ENCODE measurements at regions of chr18 and their contacts with region 1.

Region 1: GRCh38 chr18:80034068-80034851 is at the start of gene RBFA:
- DNase-seq: peak; percentile 97
- H3K4me3 Mint-ChIP-seq: peak within 1 kb of the TSS; percentile 96
- H3K27ac Mint-ChIP-seq: peak within 1 kb of the TSS; percentile 95
- H3K4me1 Mint-ChIP-seq: peaks cover 16% of the 10 kb centered on the region
- H3K27me3 Mint-ChIP-seq: no peaks in the 10 kb centered on the region
- CTCF ChIP-seq: peak; percentile 28
- total RNA-seq, gene RBFA: 20.5 TPM in 2 replicates

Region 2: DNA sequence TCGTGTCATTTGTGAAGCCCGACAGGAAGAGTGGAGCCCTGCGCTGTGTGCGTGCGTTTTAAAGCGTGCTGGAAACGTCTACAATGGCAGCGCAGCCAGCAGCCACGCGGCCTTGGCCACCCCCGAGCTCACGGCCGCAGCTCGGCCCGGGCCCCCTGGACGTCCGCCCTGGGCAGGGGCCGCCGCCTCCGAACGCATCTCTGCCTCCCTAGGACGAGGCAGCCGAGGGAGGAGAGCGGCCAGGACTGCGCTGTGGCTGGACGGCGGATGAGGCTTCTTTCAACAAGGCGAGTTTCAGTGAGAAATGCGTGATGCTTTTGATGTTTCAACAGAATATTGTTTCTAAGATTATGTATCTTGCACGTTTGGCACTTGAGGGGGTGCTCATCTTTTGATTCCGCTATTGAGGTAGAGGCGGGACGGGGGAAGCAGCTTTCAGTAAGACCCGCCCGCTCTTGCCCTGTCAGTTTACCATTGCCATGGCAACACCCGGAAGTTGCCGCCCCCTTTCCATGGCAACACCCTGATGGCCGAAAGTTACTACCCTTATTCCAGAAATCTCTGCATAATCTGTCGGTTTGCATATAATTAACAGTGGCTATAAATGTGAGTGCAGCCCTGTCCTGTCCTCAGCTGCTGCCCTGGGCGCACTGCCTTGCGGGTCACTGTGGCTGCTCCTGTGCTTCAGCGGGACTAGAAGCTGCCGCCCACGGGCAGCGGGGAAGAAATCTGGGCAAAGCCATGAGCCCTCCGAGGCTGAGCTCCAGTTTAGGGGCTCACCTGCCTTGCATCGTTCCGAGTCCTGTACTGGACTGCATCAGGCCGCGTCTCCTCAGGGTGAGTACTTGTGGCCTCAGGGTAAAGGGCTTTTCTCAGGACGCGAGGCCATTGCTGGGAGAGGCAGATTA is 113.4 kb after region 1 on chr18:
- CTCF ChIA-PET with region 1: no interaction called
- intact Hi-C with region 1: loop called (anchors 10 kb)
- DNase-seq: peak; percentile 59
- H3K4me3 Mint-ChIP-seq: peak overlapping the region; percentile 68
- H3K27ac Mint-ChIP-seq: no peak overlapping the region
- H3K4me1 Mint-ChIP-seq: no peaks in the 10 kb centered on the region
- H3K27me3 Mint-ChIP-seq: no peaks in the 10 kb centered on the region
- CTCF ChIP-seq: no peak